CD4-positive, alpha-beta memory T cell (primary cell): ENCODE measurements at regions of chr7 and their contacts with region 1.

Region 1: DNA sequence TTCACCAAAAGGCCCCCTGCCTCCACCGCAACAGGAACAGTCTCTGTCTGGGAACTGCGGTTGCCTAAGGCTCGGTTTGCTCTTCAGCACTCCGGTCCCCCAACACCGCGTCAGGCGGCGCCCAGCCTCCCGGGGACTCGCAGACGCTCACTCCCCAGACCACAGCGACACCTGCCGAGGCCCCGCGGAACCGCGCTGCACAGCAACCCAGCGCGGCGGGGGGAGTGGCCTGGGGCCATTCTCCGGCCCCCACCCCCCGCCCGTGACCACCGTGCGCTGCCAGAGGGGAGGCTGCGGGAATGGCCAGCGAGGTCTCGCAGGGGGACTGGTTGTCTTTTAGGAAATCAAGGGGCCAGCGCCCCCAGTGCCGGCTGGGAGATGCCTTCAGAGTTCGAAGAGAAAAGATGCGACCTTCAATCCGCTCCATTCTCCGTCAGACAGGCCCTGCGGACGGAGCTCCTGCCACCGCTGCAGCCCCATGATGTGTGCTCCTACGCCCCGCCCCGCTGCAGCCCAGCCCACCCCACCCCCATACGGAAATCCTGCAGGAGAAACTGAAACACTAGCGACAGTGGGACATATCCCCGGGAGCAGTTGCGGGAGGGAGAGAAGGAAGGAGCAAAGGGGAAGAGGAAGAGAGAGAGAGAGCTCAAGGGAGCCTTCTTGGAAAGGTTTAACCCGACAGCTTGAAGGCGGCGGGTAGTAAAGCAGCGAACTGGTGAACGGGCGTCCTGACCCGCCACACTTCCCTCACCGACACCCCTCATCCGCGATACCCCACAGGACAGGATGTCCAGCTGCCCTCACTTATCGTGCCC is 137.4 kb upstream of the CDCA7L start:
- DNase-seq: peak; percentile 71 to 84 (median 75)
- H3K4me3 ChIP-seq: peak overlapping the region; percentile 49 to 70
- H3K4me3 Mint-ChIP-seq: peak overlapping the region; percentile 83 to 90 (median 87)
- H3K27ac ChIP-seq: peak overlapping the region; percentile 18
- H3K27ac Mint-ChIP-seq: peak overlapping the region in 5 of 7 donors; percentile 50 to 81 (median 66)
- H3K4me1 ChIP-seq: peaks cover 12% of the 10 kb centered on the region
- H3K4me1 Mint-ChIP-seq: peaks cover 6 to 19% (median 13%) of the 10 kb centered on the region in 4 donors
- H3K27me3 ChIP-seq: no peaks in the 10 kb centered on the region
- H3K27me3 Mint-ChIP-seq: peaks cover 11 to 20% of the 10 kb centered on the region in 2 donors

Region 2: GRCh38 chr7:22001345-22002004 is 81.6 kb before region 1 on chr7:
- CTCF ChIA-PET with region 1: interaction called, 3 read pairs
- POLR2A ChIA-PET with region 1: no interaction called
- intact Hi-C with region 1: loop called (anchors 10 kb)
- DNase-seq: peak; percentile 27 to 56 (median 47)
- H3K4me3 ChIP-seq: no peak overlapping the region
- H3K4me3 Mint-ChIP-seq: peak overlapping the region in 3 of 8 donors; percentile 33 to 63 (median 60)
- H3K27ac ChIP-seq: no peak overlapping the region
- H3K27ac Mint-ChIP-seq: peak overlapping the region in 1 of 7 donors; percentile 19
- H3K4me1 ChIP-seq: no peaks in the 10 kb centered on the region
- H3K4me1 Mint-ChIP-seq: peaks cover 0 to 5% (median 2%) of the 10 kb centered on the region in 4 donors
- H3K27me3 ChIP-seq: no peaks in the 10 kb centered on the region
- H3K27me3 Mint-ChIP-seq: peaks cover 2 to 6% of the 10 kb centered on the region in 2 donors

Region 3: GRCh38 chr7:22066484-22066883 is 16.6 kb before region 1 on chr7:
- CTCF ChIA-PET with region 1: interaction called, 21 read pairs
- POLR2A ChIA-PET with region 1: no interaction called
- intact Hi-C with region 1: no loop called
- DNase-seq: no peak
- H3K4me3 ChIP-seq: no peak overlapping the region
- H3K4me3 Mint-ChIP-seq: no peak overlapping the region
- H3K27ac ChIP-seq: no peak overlapping the region
- H3K27ac Mint-ChIP-seq: no peak overlapping the region
- H3K4me1 ChIP-seq: no peaks in the 10 kb centered on the region
- H3K4me1 Mint-ChIP-seq: no peaks in the 10 kb centered on the region
- H3K27me3 ChIP-seq: no peaks in the 10 kb centered on the region
- H3K27me3 Mint-ChIP-seq: peaks cover 7 to 10% of the 10 kb centered on the region in 2 donors

Region 4: GRCh38 chr7:22094413-22095342 is 11.6 kb after region 1 on chr7:
- CTCF ChIA-PET with region 1: interaction called, 30 read pairs
- POLR2A ChIA-PET with region 1: interaction called, 4 read pairs
- intact Hi-C with region 1: no loop called
- DNase-seq: no peak
- H3K4me3 ChIP-seq: no peak overlapping the region
- H3K4me3 Mint-ChIP-seq: peak overlapping the region in 1 of 8 donors; percentile 13
- H3K27ac ChIP-seq: no peak overlapping the region
- H3K27ac Mint-ChIP-seq: no peak overlapping the region
- H3K4me1 ChIP-seq: no peaks in the 10 kb centered on the region
- H3K4me1 Mint-ChIP-seq: no peaks in the 10 kb centered on the region
- H3K27me3 ChIP-seq: no peaks in the 10 kb centered on the region
- H3K27me3 Mint-ChIP-seq: peaks cover 5 to 8% of the 10 kb centered on the region in 2 donors

Region 5: DNA sequence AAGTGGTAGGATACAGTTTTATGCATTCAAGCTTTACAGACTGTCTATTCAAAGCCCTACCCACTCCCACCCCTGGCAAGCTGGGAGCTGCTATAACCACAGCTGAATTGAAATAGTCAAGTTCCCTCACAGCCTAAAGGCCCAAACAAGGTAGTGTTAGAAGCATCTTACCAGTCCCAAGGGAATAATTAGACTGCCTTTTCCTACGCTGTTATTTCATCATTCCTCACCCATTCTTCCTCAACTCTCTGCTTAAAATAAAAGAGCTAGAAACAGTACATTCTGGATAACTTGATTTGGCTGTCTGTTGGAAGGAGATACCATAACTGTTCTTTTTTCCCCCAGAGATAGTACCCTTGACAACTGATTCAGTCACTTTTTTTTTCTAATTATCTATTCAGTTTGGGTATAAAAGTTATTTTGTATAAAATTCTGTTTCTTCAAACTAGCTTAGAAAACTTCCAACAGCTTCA is 219.9 kb after region 1 on chr7:
- CTCF ChIA-PET with region 1: no interaction called
- POLR2A ChIA-PET with region 1: no interaction called
- intact Hi-C with region 1: no loop called
- DNase-seq: no peak
- H3K4me3 ChIP-seq: no peak overlapping the region
- H3K4me3 Mint-ChIP-seq: no peak overlapping the region
- H3K27ac ChIP-seq: no peak overlapping the region
- H3K27ac Mint-ChIP-seq: no peak overlapping the region
- H3K4me1 ChIP-seq: no peaks in the 10 kb centered on the region
- H3K4me1 Mint-ChIP-seq: no peaks in the 10 kb centered on the region
- H3K27me3 ChIP-seq: no peaks in the 10 kb centered on the region
- H3K27me3 Mint-ChIP-seq: peaks cover 9 to 11% of the 10 kb centered on the region in 2 donors